ENCODE measurements at regions of chr10 and their contacts with region 1.

Region 1: GRCh38 chr10:128069351-128070051 is 56.7 kb downstream of the MKI67 start:
- DNase-seq: peak; percentile 58 to 96 (median 80)

Region 2: DNA sequence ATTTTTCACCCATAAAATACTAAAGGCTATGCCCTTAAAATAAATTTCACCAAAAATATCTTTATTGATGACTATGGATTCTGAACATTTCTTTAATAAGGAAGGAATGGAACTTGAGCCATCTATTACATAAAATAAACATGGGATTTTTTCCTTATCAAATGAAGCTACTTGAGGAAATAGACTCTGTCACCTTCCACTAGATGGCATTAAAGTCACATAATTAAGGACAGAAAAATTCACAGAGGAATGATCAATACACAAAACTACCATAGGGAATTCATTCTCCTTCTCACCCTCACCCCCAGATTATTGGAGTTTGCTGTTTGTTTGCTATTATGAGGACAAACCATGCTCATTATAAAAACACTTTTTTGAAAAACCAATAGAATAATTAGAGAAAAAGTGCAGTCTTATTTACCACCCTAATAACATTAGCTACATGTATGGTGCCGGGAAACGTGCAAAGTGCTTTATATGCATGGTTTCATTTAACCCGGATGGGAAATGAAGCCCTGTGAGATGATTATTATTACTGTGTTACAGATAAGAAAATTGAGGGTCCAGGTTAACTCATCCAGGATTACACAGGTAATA is 353.6 kb before region 1 on chr10:
- intact Hi-C with region 1: loop called (anchors 5 kb)
- DNase-seq: no peak

Region 3: GRCh38 chr10:127906548-127907377 is 162.7 kb before region 1 on chr10 and contains the start of gene PTPRE:
- intact Hi-C with region 1: loop called (anchors 1 kb)
- DNase-seq: peak in 9 of 10 donors; percentile 40 to 96 (median 66)

Region 4: GRCh38 chr10:128011175-128011979 is 58.1 kb before region 1 on chr10:
- intact Hi-C with region 1: loop called (anchors 2 kb)
- DNase-seq: peak; percentile 67 to 97 (median 85)

Region 5: GRCh38 chr10:128035557-128035973 is 33.9 kb before region 1 on chr10:
- intact Hi-C with region 1: loop called (anchors 2 kb)
- DNase-seq: peak in 7 of 10 donors; percentile 29 to 89 (median 52)

Measured in posterior cingulate gyrus (tissue), 11 donors.